ENCODE measurements at regions of chr9 and their contacts with region 1.

Region 1: DNA sequence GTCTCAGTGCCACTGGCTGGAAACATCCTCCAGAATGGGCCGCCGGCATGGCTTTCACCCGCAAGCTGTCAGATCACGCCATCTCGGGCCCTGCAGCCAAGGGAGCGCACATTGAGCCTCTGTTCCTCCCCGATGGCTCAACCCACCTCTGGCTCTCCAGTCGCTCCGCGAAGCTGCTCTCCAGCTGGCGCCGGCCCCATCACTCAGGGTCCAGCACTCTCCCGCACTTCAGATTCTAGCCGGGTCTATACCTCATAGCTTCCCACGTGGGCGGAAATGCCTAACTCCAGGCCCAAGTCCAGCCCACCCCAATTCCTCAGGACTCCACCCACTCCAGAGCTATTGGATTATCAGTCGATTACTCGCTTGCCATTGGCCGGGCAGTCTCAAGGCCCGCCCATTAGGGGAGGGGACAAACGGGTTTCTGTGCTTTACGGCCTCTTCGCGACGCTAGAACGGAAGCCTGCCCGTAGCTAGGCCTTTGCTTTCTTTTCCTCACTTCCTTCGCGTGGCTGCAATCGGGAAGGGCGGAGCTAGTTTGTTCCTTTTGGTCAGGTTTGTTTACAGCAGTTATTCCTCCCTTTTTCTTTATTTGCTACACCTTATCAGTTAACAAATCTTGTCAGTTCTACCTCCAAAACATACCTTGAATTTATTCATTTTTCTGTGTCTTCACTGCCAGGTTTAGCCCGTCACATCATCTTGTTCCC is at the start of gene NOL6:
- DNase-seq: peak; percentile 98 to 99 (median 99)
- ATAC-seq: peak; percentile 100
- H3K4me3 ChIP-seq: peak within 1 kb of the TSS; percentile 71
- H3K27ac ChIP-seq: peak within 1 kb of the TSS; percentile 44
- H3K4me1 ChIP-seq: no peaks in the 10 kb centered on the region
- H3K27me3 ChIP-seq: no peaks in the 10 kb centered on the region
- total RNA-seq, gene NOL6: 13.7 to 24.6 (median 15.4) TPM

Region 2: DNA sequence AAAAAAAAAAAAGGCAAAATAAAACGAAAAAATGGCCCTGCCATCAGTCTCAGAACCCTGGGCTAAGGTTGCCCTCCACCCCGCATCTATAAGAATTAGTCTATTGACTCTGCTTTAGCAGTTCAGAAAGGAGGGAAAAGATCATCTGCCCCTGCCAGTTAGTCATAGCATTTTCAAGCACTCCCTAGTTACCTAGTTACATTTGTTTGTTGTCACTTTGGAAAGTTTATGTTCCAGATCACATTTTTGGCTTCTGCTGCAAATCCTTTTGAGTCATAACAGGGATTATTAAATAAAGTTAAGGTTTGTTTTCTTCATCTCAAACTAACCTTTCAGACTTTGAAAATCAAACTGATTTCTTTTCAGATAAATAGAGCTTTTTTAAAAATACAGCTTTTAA is 123.5 kb before region 1 on chr9:
- intact Hi-C with region 1: loop called in 1 of 4 experiments (anchors 10 kb)
- DNase-seq: no peak
- ATAC-seq: peak; percentile 64 to 66
- H3K4me3 ChIP-seq: no peak overlapping the region
- H3K27ac ChIP-seq: peak overlapping the region; percentile 57
- H3K4me1 ChIP-seq: peaks cover 2% of the 10 kb centered on the region
- H3K27me3 ChIP-seq: no peaks in the 10 kb centered on the region

Region 3: DNA sequence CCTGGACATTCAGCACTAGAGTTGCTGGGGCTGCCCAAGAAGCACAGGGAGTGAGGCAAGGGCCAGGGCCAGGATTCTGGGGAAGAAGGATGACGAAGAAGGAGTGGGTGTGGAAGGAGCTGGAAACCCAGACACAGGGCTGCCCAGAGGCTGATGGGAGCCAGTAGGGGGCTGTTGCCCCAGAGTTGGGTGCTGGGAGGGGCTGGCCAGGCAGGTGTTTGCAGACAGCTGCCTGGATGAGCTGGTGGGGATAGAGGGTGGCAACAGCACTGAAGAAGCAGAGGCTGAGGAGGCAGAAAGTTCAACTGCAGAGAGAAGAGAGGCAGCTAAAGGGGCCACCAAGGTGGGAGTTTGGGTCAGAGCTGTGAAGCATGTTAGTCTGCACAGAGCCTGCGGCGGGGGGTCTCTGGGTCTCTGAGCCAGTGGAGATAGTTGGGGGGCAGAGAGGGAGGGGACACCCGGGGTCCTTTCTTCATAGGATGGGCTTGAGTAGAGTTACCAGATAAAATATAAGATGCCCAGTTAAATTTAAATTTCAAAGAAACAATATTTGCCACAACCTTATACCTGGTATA is 68.9 kb before region 1 on chr9:
- intact Hi-C with region 1: no loop called
- DNase-seq: peak in 1 of 3 donors; percentile 42
- ATAC-seq: peak; percentile 20 to 49
- H3K4me3 ChIP-seq: no peak overlapping the region
- H3K27ac ChIP-seq: peak overlapping the region; percentile 33
- H3K4me1 ChIP-seq: no peaks in the 10 kb centered on the region
- H3K27me3 ChIP-seq: no peaks in the 10 kb centered on the region

Region 4: DNA sequence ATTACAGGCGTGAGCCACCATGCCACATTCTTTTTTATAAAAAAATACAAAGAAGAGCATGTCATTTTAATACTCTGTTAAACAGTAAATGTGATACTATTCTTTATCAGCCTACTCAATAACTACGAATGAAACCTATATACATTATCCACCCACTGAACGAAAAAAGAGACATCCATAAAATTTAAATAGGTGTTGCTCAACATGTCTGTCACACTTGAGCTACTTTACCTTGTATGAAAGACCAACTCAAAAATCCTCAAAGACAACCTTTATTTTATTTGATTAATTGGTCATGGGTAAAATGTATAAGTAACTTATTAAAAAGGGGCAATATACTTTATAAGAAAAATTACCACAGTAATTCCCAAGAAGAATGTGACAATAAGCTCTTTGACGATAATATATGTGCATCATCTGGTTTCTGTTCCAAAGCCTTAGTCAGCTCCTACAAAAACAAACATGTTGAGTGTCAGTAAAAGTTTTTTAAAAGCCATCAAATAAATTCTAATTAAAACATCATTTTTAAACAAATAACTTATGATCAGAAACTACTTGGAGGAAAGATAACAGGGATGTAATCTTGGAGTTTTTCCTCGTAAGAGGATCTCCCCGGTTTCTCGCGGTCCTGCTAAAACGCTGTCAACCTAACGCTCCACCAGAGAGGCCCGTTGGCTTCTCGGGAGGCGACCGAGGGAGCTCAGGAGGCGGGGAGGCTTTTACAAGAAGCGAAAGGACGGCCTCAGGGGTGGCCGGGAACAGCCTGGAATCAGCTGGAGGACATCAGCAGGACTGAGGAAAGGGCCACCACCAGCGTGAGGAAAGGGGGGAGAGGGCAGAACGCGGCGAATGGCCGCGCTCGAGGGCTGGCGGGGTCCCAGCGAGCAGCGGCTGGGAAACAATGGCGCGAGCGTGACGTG is 36.7 kb after region 1 on chr9:
- intact Hi-C with region 1: loop called in 1 of 4 experiments (anchors 5 kb)
- DNase-seq: peak; percentile 68 to 90 (median 90)
- ATAC-seq: peak; percentile 86 to 95
- H3K4me3 ChIP-seq: peak overlapping the region; percentile 89
- H3K27ac ChIP-seq: peak overlapping the region; percentile 92
- H3K4me1 ChIP-seq: no peaks in the 10 kb centered on the region
- H3K27me3 ChIP-seq: no peaks in the 10 kb centered on the region